WTC11 (cell line): ENCODE measurements at regions of chr14 and their contacts with region 1.

Region 1: GRCh38 chr14:75879031-75879430 is 102.8 kb downstream of the TGFB3 start:
- DNase-seq: no peak
- ATAC-seq: no peak
- H3K4me3 Mint-ChIP-seq: no peak overlapping the region
- H3K27ac Mint-ChIP-seq: no peak overlapping the region
- H3K4me1 Mint-ChIP-seq: peaks cover 18% of the 10 kb centered on the region
- H3K27me3 Mint-ChIP-seq: no peaks in the 10 kb centered on the region
- CTCF ChIP-seq: no peak

Region 2: DNA sequence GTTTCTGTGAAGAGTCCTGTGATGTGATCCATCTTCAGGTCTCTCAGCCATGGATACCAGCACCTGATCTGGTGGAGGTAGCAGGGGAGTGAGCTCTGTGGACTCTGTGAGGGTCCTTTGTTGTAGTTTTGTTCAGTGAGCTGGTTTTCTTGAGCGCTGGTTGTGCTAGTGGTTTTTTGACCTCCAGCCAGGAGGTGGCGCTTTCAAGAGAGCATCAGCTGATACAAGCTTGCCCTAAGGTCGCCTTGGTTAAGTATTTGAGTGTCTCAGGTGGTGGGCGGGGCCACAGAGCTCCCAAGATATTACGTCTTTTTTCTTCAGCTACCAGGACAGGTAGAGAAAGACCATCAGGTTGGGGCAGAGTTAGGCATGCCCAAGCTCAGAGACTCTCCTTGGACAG is 78.2 kb before region 1 on chr14:
- CTCF ChIA-PET with region 1: interaction called, 13 read pairs
- POLR2A ChIA-PET with region 1: no interaction called
- DNase-seq: peak; percentile 64
- ATAC-seq: peak; percentile 95
- H3K4me3 Mint-ChIP-seq: no peak overlapping the region
- H3K27ac Mint-ChIP-seq: no peak overlapping the region
- H3K4me1 Mint-ChIP-seq: peaks cover 12% of the 10 kb centered on the region
- H3K27me3 Mint-ChIP-seq: no peaks in the 10 kb centered on the region
- CTCF ChIP-seq: 0 out of 2 replicates have a peak, but pooled peaks have one; percentile 21

Region 3: GRCh38 chr14:75861161-75861621 is 17.8 kb before region 1 on chr14:
- CTCF ChIA-PET with region 1: interaction called, 11 read pairs
- POLR2A ChIA-PET with region 1: interaction called, 4 read pairs
- DNase-seq: no peak
- ATAC-seq: peak; percentile 95
- H3K4me3 Mint-ChIP-seq: no peak overlapping the region
- H3K27ac Mint-ChIP-seq: no peak overlapping the region
- H3K4me1 Mint-ChIP-seq: peaks cover 22% of the 10 kb centered on the region
- H3K27me3 Mint-ChIP-seq: peaks cover 71% of the 10 kb centered on the region
- CTCF ChIP-seq: no peak

Region 4: DNA sequence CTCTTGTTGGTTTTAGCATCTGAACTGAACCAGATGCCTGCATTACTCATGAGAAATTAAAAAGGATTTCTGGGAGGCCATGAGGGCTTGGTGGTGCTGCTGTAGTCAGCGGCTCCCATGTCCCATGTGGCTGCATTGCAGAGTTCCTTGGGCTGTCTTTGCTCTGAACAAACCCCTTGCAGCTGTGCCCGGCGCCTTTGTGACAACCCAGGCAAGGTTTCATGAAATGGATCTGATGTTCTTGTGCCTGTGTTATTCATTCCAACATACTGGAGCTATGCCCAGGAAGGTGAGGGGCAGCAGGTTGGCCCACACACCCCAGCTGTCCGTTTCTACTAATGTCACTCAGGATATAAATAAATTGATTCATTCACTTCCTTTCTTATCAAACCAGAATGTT is 62.0 kb after region 1 on chr14:
- CTCF ChIA-PET with region 1: interaction called, 11 read pairs
- POLR2A ChIA-PET with region 1: no interaction called
- DNase-seq: no peak
- ATAC-seq: no peak
- H3K4me3 Mint-ChIP-seq: no peak overlapping the region
- H3K27ac Mint-ChIP-seq: no peak overlapping the region; the same call in 1 of the 2 replicates
- H3K4me1 Mint-ChIP-seq: peaks cover 8% of the 10 kb centered on the region
- H3K27me3 Mint-ChIP-seq: no peaks in the 10 kb centered on the region
- CTCF ChIP-seq: no peak